OCI-LY7 (cell line): ENCODE measurements at regions of chr1 and their contacts with region 1.

Region 1: GRCh38 chr1:208562151-208562960 is 318.2 kb upstream of the PLXNA2 start:
- DNase-seq: no peak
- H3K4me3 ChIP-seq: no peak overlapping the region
- H3K27ac ChIP-seq: no peak overlapping the region
- H3K4me1 ChIP-seq: no peaks in the 10 kb centered on the region
- CTCF ChIP-seq: no peak

Region 2: DNA sequence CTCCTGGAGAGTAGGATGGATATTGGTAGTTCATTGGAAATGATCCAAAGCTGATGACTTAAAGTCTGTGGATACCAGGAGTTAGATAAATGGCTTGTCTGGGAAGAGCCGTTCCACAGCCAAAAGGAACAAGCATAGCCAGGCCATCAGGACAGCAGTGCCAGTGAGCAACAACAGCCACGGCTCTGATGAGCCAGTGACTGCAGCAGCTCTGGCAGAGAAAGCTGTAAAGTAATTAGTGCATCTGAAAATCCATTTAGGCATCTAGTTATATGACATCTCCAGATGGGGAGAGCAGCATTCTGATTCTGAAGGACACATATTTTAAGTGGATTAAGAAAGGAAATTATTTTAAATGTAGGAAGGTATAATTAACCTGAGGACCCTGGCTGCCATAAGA is 62.0 kb before region 1 on chr1:
- CTCF ChIA-PET with region 1: no interaction called
- POLR2A ChIA-PET with region 1: interaction called, 10 read pairs
- intact Hi-C with region 1: no loop called
- DNase-seq: no peak
- H3K4me3 ChIP-seq: no peak overlapping the region
- H3K27ac ChIP-seq: no peak overlapping the region
- H3K4me1 ChIP-seq: no peaks in the 10 kb centered on the region
- CTCF ChIP-seq: no peak